ENCODE measurements at regions of chr17 and their contacts with region 1.

Region 1: GRCh38 chr17:34361478-34362061 is 1.5 kb downstream of the CCL1 start:
- DNase-seq: peak; percentile 65 to 94 (median 86)

Region 2: GRCh38 chr17:34171245-34171818 is 190.2 kb before region 1 on chr17:
- intact Hi-C with region 1: loop called (anchors 10 kb)
- DNase-seq: peak in 36 of 42 donors; percentile 33 to 79 (median 56)

Region 3: GRCh38 chr17:34199932-34200534 is 161.5 kb before region 1 on chr17:
- intact Hi-C with region 1: loop called (anchors 5 kb)
- DNase-seq: peak; percentile 6 to 90 (median 68)

Region 4: GRCh38 chr17:34398990-34399389 is 37.4 kb after region 1 on chr17:
- intact Hi-C with region 1: no loop called
- DNase-seq: peak in 1 of 42 donors; percentile 17